ENCODE measurements at regions of chr5 and their contacts with region 1.

Region 1: DNA sequence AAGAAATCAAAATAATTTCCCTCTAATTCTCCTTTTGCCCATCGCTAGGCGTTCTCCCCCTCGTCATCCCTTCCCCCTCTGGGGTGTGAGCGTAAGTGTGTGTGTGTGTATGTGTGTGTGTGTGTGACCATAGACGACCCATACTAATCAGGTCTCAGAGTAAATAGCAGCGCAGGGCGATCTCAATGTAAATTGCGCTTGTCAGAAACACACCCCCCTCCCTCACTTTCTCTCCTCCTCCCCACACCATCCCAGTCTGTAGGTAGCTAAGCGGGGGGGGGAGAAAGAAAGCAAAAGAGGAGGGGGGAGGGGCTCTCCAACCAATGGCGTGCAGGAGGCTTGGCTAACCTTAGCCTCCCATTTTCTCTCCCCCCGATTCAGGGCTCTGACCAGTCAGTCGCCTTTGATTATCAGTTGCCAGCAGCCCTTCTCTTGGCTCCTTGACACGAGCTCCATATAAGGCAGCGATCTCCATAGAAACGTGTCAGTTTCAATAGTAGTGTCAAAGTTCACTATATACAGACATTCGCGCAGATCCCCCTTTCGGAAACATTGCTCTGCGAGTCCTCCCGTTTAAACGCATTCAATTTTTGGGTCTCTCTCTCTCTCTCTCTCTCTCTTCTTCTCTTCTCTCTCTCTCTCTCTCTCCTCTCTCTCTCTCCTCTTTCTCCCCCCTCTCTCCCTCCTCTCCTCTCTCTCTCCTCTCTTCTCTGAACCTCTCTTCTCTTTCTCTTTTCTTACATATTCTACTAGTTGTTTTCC is at the start of gene NR2F1:
- DNase-seq: peak; percentile 18
- ATAC-seq: no peak
- H3K4me3 Mint-ChIP-seq: no peak within 1 kb of the TSS
- H3K27ac Mint-ChIP-seq: no peak within 1 kb of the TSS
- H3K4me1 Mint-ChIP-seq: peaks cover 28% of the 10 kb centered on the region
- H3K27me3 Mint-ChIP-seq: peaks cover 39% of the 10 kb centered on the region
- total RNA-seq, gene NR2F1: not detected

Region 2: GRCh38 chr5:93570294-93571113 is 12.4 kb before region 1 on chr5:
- CTCF ChIA-PET with region 1: interaction called, 7 read pairs
- POLR2A ChIA-PET with region 1: no interaction called
- intact Hi-C with region 1: loop called in 1 of 2 experiments (anchors 2 kb)
- DNase-seq: peak; percentile 33
- ATAC-seq: peak; percentile 44
- H3K4me3 Mint-ChIP-seq: no peak overlapping the region
- H3K27ac Mint-ChIP-seq: no peak overlapping the region
- H3K4me1 Mint-ChIP-seq: peaks cover 24% of the 10 kb centered on the region
- H3K27me3 Mint-ChIP-seq: peaks cover 68% of the 10 kb centered on the region

Region 3: GRCh38 chr5:93620487-93621326 is 37.8 kb after region 1 on chr5:
- CTCF ChIA-PET with region 1: no interaction called
- POLR2A ChIA-PET with region 1: interaction called, 5 read pairs
- intact Hi-C with region 1: loop called (anchors 2 to 5 kb)
- DNase-seq: peak; percentile 77
- ATAC-seq: peak; percentile 82
- H3K4me3 Mint-ChIP-seq: peak overlapping the region; percentile 78
- H3K27ac Mint-ChIP-seq: peak overlapping the region; percentile 62
- H3K4me1 Mint-ChIP-seq: peaks cover 28% of the 10 kb centered on the region
- H3K27me3 Mint-ChIP-seq: peaks cover 18% of the 10 kb centered on the region

Region 4: DNA sequence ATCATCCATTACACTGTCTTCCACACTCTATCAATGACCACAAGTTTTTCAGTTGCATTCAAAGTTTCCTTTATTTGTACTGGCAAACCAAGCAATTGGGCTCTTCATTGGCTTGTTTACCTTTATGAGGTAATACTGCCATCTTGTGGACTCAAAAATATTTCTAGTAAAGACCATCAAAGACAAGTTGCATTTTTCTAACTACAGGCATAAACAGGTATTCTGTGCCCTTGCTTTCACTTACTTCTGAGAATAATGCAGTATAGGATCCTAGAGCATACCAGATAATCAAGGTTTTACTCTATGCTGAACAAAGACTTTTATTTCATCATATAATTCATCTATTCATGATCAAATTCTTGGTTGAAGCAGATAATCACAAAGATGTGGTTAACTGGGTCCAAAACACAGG is 332.3 kb after region 1 on chr5:
- CTCF ChIA-PET with region 1: interaction called, 6 read pairs
- POLR2A ChIA-PET with region 1: no interaction called
- intact Hi-C with region 1: loop called (anchors 1 kb)
- DNase-seq: no peak
- ATAC-seq: peak; percentile 73
- H3K4me3 Mint-ChIP-seq: no peak overlapping the region
- H3K27ac Mint-ChIP-seq: no peak overlapping the region
- H3K4me1 Mint-ChIP-seq: no peaks in the 10 kb centered on the region
- H3K27me3 Mint-ChIP-seq: no peaks in the 10 kb centered on the region

Region 5: DNA sequence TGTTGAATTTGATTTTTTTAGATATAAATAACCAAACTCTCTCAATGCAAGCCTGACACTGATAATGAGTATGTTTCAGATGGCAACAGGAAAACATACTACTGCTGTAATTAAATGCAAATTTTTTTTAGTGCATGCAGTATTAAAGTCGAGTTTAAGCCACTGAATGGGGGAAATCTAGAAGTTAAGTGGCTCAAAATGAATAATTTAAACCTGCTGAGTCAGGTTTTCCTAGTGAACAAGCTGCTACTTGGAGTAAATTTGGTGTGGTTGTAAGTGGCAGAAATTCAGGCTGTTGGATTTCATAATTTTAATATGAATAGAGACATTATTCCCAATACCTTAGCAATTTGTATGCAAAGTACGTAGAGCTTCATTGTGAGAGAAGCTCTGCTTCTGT is 1157.4 kb after region 1 on chr5:
- CTCF ChIA-PET with region 1: no interaction called
- POLR2A ChIA-PET with region 1: no interaction called
- intact Hi-C with region 1: loop called in 1 of 2 experiments (anchors 2 kb)
- DNase-seq: no peak
- ATAC-seq: no peak
- H3K4me3 Mint-ChIP-seq: no peak overlapping the region
- H3K27ac Mint-ChIP-seq: no peak overlapping the region
- H3K4me1 Mint-ChIP-seq: peaks cover under 1% of the 10 kb centered on the region
- H3K27me3 Mint-ChIP-seq: no peaks in the 10 kb centered on the region

Region 6: GRCh38 chr5:94908889-94909480 is 1326.1 kb after region 1 on chr5:
- CTCF ChIA-PET with region 1: no interaction called
- POLR2A ChIA-PET with region 1: no interaction called
- intact Hi-C with region 1: loop called in 1 of 2 experiments (anchors 5 kb)
- DNase-seq: peak; percentile 14
- ATAC-seq: no peak
- H3K4me3 Mint-ChIP-seq: no peak overlapping the region
- H3K27ac Mint-ChIP-seq: no peak overlapping the region
- H3K4me1 Mint-ChIP-seq: no peaks in the 10 kb centered on the region
- H3K27me3 Mint-ChIP-seq: no peaks in the 10 kb centered on the region

Measured in activated CD4-positive, alpha-beta T cell treated with anti-CD3 and anti-CD28 coated beads for 36 hours (primary cell).